ENCODE measurements at regions of chr5 and their contacts with region 1.

Region 1: GRCh38 chr5:176660860-176661641 is 13.8 kb downstream of the TSPAN17 start:
- DNase-seq: peak; percentile 16
- ATAC-seq: peak; percentile 89
- H3K4me3 ChIP-seq: no peak overlapping the region
- H3K27ac ChIP-seq: no peak overlapping the region
- H3K4me1 ChIP-seq: peaks cover 16% of the 10 kb centered on the region
- H3K27me3 ChIP-seq: no peaks in the 10 kb centered on the region
- CTCF ChIP-seq: peak; percentile 95 to 98 (median 96); a peak in 5 of 6 replicates
- EP300 ChIP-seq: no peak
- POLR2A ChIP-seq: no peak
- RAD21 ChIP-seq: peak; percentile 88

Region 2: DNA sequence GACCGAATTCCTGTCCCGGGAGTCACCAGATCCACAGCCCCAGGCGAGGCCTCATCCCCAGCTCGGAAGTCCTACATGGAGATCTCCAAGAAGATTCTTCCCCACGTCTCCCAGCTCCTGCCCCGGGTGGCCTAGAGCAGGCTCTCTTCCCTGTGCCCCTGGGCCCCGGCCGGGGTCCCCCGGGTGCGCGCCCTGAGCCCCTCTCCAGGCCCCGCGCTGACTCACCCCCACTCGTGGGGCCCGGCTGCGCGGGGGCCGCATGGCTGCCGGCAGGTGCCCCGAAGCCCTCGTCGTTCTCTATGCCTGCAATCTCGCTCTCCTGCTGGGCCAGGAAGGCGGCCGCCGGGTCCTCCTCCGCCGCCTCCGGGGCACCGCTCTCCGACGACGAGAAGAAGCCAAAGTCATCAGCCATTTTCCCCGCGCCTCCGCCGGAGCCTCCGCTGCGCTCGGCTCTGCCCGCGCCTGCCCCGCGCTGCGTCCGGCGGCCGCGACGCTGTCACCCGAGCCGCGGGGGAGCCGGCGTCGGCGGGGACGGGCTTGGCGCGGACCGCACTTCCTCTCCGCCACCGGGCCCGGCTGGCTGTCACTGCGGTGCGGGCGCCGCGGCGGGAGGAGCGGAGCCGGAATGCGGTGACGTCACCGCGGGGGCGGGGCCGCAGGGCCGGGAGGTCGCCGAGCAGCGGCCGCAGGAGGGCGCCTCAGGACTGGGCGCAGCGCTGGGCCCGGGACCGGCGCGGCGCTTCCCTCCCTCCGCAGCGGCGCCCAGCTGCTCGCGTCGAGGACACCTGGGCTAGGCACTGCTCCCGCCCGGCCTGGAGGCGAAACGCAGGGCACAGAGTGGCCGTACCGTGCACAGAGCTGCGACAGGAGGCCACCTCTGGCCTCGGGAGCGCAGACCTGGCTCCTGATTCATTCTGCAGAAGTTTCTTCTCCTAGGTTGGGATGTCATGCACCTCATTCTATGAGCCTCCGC is 244.8 kb before region 1 on chr5 and contains the start of gene CLTB:
- CTCF ChIA-PET with region 1: interaction called, 11 read pairs
- POLR2A ChIA-PET with region 1: no interaction called
- RAD21 ChIA-PET with region 1: interaction called, 4 read pairs
- SMC1A ChIA-PET with region 1: no interaction called
- in situ Hi-C with region 1: no loop called
- intact Hi-C with region 1: no loop called
- DNase-seq: peak; percentile 37
- ATAC-seq: peak; percentile 99
- H3K4me3 ChIP-seq: peak within 1 kb of the TSS; percentile 96
- H3K27ac ChIP-seq: peak within 1 kb of the TSS; percentile 65
- H3K4me1 ChIP-seq: peaks cover 19% of the 10 kb centered on the region
- H3K27me3 ChIP-seq: no peaks in the 10 kb centered on the region
- CTCF ChIP-seq: peak; percentile 50 to 94 (median 69); a peak in 5 of 6 replicates
- EP300 ChIP-seq: no peak
- POLR2A ChIP-seq: peak; percentile 83
- RAD21 ChIP-seq: peak; percentile 79
- polyA plus RNA-seq, gene CLTB: 1.6 to 4.4 TPM

Region 3: GRCh38 chr5:176647030-176647866 is 13.8 kb before region 1 on chr5 and contains the start of gene TSPAN17:
- CTCF ChIA-PET with region 1: interaction called, 19 read pairs
- POLR2A ChIA-PET with region 1: interaction called, 5 read pairs
- RAD21 ChIA-PET with region 1: interaction called, 20 read pairs
- SMC1A ChIA-PET with region 1: interaction called, 7 read pairs
- in situ Hi-C with region 1: no loop called
- intact Hi-C with region 1: no loop called
- DNase-seq: peak; percentile 92
- ATAC-seq: peak; percentile 97
- H3K4me3 ChIP-seq: peak within 1 kb of the TSS; percentile 88
- H3K27ac ChIP-seq: peak within 1 kb of the TSS; percentile 53
- H3K4me1 ChIP-seq: peaks cover 22% of the 10 kb centered on the region
- H3K27me3 ChIP-seq: no peaks in the 10 kb centered on the region
- CTCF ChIP-seq: peak; percentile 7 to 55 (median 32); a peak in 3 of 6 replicates
- EP300 ChIP-seq: no peak
- POLR2A ChIP-seq: peak; percentile 97
- RAD21 ChIP-seq: peak; percentile 43; the same call in 1 of the 2 replicates
- polyA plus RNA-seq, gene TSPAN17: 0.24 to 1.2 TPM

Region 4: GRCh38 chr5:176693477-176693851 is 32.4 kb after region 1 on chr5:
- CTCF ChIA-PET with region 1: interaction called, 14 read pairs
- POLR2A ChIA-PET with region 1: no interaction called
- RAD21 ChIA-PET with region 1: interaction called, 3 read pairs
- SMC1A ChIA-PET with region 1: no interaction called
- in situ Hi-C with region 1: no loop called
- intact Hi-C with region 1: no loop called
- DNase-seq: no peak
- ATAC-seq: no peak
- H3K4me3 ChIP-seq: no peak overlapping the region
- H3K27ac ChIP-seq: no peak overlapping the region
- H3K4me1 ChIP-seq: no peaks in the 10 kb centered on the region
- H3K27me3 ChIP-seq: peaks cover 0 to 7% of the 10 kb centered on the region in 2 experiments; a peak in 3 of 4 replicates
- CTCF ChIP-seq: no peak
- EP300 ChIP-seq: no peak
- POLR2A ChIP-seq: no peak
- RAD21 ChIP-seq: no peak

Region 5: DNA sequence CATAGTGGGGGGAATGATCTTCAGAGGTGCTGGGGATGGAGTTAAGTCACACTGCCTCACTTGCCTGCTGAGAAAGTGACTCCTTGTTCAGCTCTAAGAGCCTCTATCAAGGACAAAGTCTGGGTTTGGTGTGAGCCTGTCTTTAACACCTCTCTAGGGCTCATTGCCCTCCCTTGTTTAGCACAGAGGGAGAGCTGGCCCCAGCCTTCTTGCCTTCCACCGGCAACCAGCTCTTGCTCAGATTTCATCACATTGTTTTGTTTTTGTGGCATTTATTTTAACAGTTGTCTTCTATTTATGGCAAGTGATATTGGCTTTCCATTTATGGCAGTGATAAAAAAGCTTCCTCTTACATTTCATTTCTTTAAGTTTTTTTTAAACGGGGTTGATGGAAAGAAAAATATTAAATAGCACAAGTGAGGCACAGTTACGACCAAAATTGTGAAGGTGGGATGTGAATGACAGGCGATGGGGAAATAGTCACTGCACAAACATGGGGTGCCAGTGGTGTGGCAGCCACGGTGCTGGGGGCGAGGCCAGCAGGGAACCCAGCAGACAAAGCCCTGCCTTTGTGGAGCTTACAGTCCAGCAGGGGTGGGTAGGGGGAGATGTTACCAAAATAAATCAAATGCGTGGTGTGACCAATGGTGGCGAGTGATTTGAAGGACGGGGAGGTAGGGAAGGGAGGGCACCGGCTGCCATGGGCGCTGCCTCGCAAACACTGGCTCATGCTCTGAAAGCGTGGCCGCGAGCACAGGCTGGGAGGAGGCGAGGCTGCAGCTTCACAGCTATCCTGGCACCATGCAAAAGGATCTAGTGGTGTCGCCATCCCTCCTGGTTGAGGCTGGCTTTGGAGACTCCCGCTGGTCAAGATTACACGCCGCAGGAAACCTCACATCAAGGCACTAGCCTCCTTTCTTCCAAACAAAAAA is 128.2 kb after region 1 on chr5:
- CTCF ChIA-PET with region 1: interaction called, 10 read pairs
- POLR2A ChIA-PET with region 1: no interaction called
- RAD21 ChIA-PET with region 1: no interaction called
- SMC1A ChIA-PET with region 1: no interaction called
- in situ Hi-C with region 1: no loop called
- intact Hi-C with region 1: no loop called
- DNase-seq: no peak
- ATAC-seq: no peak
- H3K4me3 ChIP-seq: no peak overlapping the region
- H3K27ac ChIP-seq: no peak overlapping the region
- H3K4me1 ChIP-seq: no peaks in the 10 kb centered on the region
- H3K27me3 ChIP-seq: peaks cover 0 to 5% of the 10 kb centered on the region in 2 experiments; a peak in 1 of 4 replicates
- CTCF ChIP-seq: no peak
- EP300 ChIP-seq: no peak
- POLR2A ChIP-seq: no peak
- RAD21 ChIP-seq: no peak

Region 6: GRCh38 chr5:176846335-176847140 is 185.5 kb after region 1 on chr5:
- CTCF ChIA-PET with region 1: no interaction called
- POLR2A ChIA-PET with region 1: no interaction called
- RAD21 ChIA-PET with region 1: no interaction called
- SMC1A ChIA-PET with region 1: no interaction called
- in situ Hi-C with region 1: no loop called
- intact Hi-C with region 1: no loop called
- DNase-seq: no peak
- ATAC-seq: peak; percentile 86
- H3K4me3 ChIP-seq: no peak overlapping the region
- H3K27ac ChIP-seq: no peak overlapping the region
- H3K4me1 ChIP-seq: no peaks in the 10 kb centered on the region
- H3K27me3 ChIP-seq: peaks cover 0 to 2% of the 10 kb centered on the region in 2 experiments; a peak in 1 of 4 replicates
- CTCF ChIP-seq: no peak
- EP300 ChIP-seq: no peak
- POLR2A ChIP-seq: no peak
- RAD21 ChIP-seq: no peak

Region 7: GRCh38 chr5:176901260-176902101 is 240.4 kb after region 1 on chr5:
- CTCF ChIA-PET with region 1: interaction called, 11 read pairs
- POLR2A ChIA-PET with region 1: no interaction called
- RAD21 ChIA-PET with region 1: interaction called, 8 read pairs
- SMC1A ChIA-PET with region 1: interaction called, 5 read pairs
- in situ Hi-C with region 1: no loop called
- intact Hi-C with region 1: loop called (anchors 5 kb)
- DNase-seq: peak; percentile 54
- ATAC-seq: peak; percentile 82
- H3K4me3 ChIP-seq: no peak overlapping the region
- H3K27ac ChIP-seq: peak overlapping the region; percentile 61
- H3K4me1 ChIP-seq: peaks cover 10% of the 10 kb centered on the region
- H3K27me3 ChIP-seq: no peaks in the 10 kb centered on the region
- CTCF ChIP-seq: no peak
- EP300 ChIP-seq: peak in 1 of 2 experiments; percentile 11; a peak in 1 of 4 replicates
- POLR2A ChIP-seq: no peak
- RAD21 ChIP-seq: no peak

Region 8: GRCh38 chr5:177071666-177072385 is 410.8 kb after region 1 on chr5:
- CTCF ChIA-PET with region 1: interaction called, 17 read pairs
- POLR2A ChIA-PET with region 1: no interaction called
- RAD21 ChIA-PET with region 1: interaction called, 18 read pairs
- SMC1A ChIA-PET with region 1: interaction called, 11 read pairs
- in situ Hi-C with region 1: no loop called
- intact Hi-C with region 1: no loop called
- DNase-seq: peak; percentile 56
- ATAC-seq: peak; percentile 98
- H3K4me3 ChIP-seq: no peak overlapping the region
- H3K27ac ChIP-seq: no peak overlapping the region
- H3K4me1 ChIP-seq: peaks cover 10% of the 10 kb centered on the region
- H3K27me3 ChIP-seq: no peaks in the 10 kb centered on the region
- CTCF ChIP-seq: peak; percentile 87 to 90 (median 90)
- EP300 ChIP-seq: no peak
- POLR2A ChIP-seq: no peak
- RAD21 ChIP-seq: peak; percentile 63